ENCODE measurements at regions of chr17 and their contacts with region 1.

Region 1: GRCh38 chr17:80426681-80427326 is 11.8 kb downstream of the ENDOV start:
- DNase-seq: peak; percentile 50
- ATAC-seq: peak; percentile 98
- H3K4me3 ChIP-seq: no peak overlapping the region
- H3K27ac ChIP-seq: no peak overlapping the region
- H3K4me1 ChIP-seq: no peaks in the 10 kb centered on the region
- H3K27me3 ChIP-seq: no peaks in the 10 kb centered on the region
- CTCF ChIP-seq: peak; percentile 94
- POLR2A ChIP-seq: peak; percentile 55; the same call in 1 of the 2 replicates
- RAD21 ChIP-seq: peak; percentile 99

Region 2: GRCh38 chr17:80504686-80505413 is 78.0 kb after region 1 on chr17:
- CTCF ChIA-PET with region 1: no interaction called
- POLR2A ChIA-PET with region 1: no interaction called
- dilution Hi-C with region 1: no loop called
- in situ Hi-C with region 1: no loop called
- intact Hi-C with region 1: no loop called
- DNase-seq: peak; percentile 85
- ATAC-seq: peak; percentile 70
- H3K4me3 ChIP-seq: no peak overlapping the region
- H3K27ac ChIP-seq: peak overlapping the region; percentile 11; the same call in 1 of the 2 replicates
- H3K4me1 ChIP-seq: peaks cover 18% of the 10 kb centered on the region
- H3K27me3 ChIP-seq: no peaks in the 10 kb centered on the region
- CTCF ChIP-seq: peak; percentile 28; the same call in 1 of the 2 replicates
- POLR2A ChIP-seq: peak; percentile 59
- RAD21 ChIP-seq: peak; percentile 26; the same call in 1 of the 2 replicates

Region 3: GRCh38 chr17:80559825-80560251 is 133.0 kb after region 1 on chr17:
- CTCF ChIA-PET with region 1: no interaction called
- POLR2A ChIA-PET with region 1: no interaction called
- dilution Hi-C with region 1: no loop called
- in situ Hi-C with region 1: no loop called
- intact Hi-C with region 1: loop called (anchors 5 kb)
- DNase-seq: peak; percentile 88
- ATAC-seq: peak; percentile 84
- H3K4me3 ChIP-seq: no peak overlapping the region
- H3K27ac ChIP-seq: peak overlapping the region; percentile 13; the same call in 1 of the 2 replicates
- H3K4me1 ChIP-seq: peaks cover 15% of the 10 kb centered on the region
- H3K27me3 ChIP-seq: no peaks in the 10 kb centered on the region
- CTCF ChIP-seq: no peak
- POLR2A ChIP-seq: no peak
- RAD21 ChIP-seq: no peak

Region 4: GRCh38 chr17:80575057-80575875 is 148.5 kb after region 1 on chr17:
- CTCF ChIA-PET with region 1: no interaction called
- POLR2A ChIA-PET with region 1: no interaction called
- dilution Hi-C with region 1: no loop called
- in situ Hi-C with region 1: loop called (anchors 5 kb)
- intact Hi-C with region 1: loop called (anchors 1 kb)
- DNase-seq: peak; percentile 89
- ATAC-seq: peak; percentile 98
- H3K4me3 ChIP-seq: no peak overlapping the region
- H3K27ac ChIP-seq: no peak overlapping the region
- H3K4me1 ChIP-seq: peaks cover 5% of the 10 kb centered on the region; the same call in 1 of the 2 replicates
- H3K27me3 ChIP-seq: no peaks in the 10 kb centered on the region
- CTCF ChIP-seq: peak; percentile 100; the same call in 1 of the 2 replicates
- POLR2A ChIP-seq: peak; percentile 69; the same call in 1 of the 2 replicates
- RAD21 ChIP-seq: peak; percentile 100

Region 5: GRCh38 chr17:80892019-80892855 is 465.4 kb after region 1 on chr17:
- CTCF ChIA-PET with region 1: no interaction called
- POLR2A ChIA-PET with region 1: no interaction called
- dilution Hi-C with region 1: no loop called
- in situ Hi-C with region 1: no loop called
- intact Hi-C with region 1: loop called (anchors 5 kb)
- DNase-seq: peak; percentile 99
- ATAC-seq: peak; percentile 89
- H3K4me3 ChIP-seq: no peak overlapping the region
- H3K27ac ChIP-seq: peak overlapping the region; percentile 94
- H3K4me1 ChIP-seq: peaks cover 29% of the 10 kb centered on the region
- H3K27me3 ChIP-seq: no peaks in the 10 kb centered on the region
- CTCF ChIP-seq: no peak
- POLR2A ChIP-seq: peak; percentile 80
- RAD21 ChIP-seq: peak; percentile 17

Measured in IMR-90 (cell line).